Vagina (tissue), 2 donors: ENCODE measurements at regions of chr5 and their contacts with region 1.

Region 1: GRCh38 chr5:119274767-119275130 is 81.1 kb upstream of the TNFAIP8 start:
- DNase-seq: no peak
- H3K4me3 ChIP-seq: no peak overlapping the region
- H3K27ac ChIP-seq: peak overlapping the region; percentile 64
- H3K4me1 ChIP-seq: peaks cover 52% of the 10 kb centered on the region
- H3K27me3 ChIP-seq: no peaks in the 10 kb centered on the region
- CTCF ChIP-seq: no peak
- POLR2A ChIP-seq: no peak

Region 2: GRCh38 chr5:119313658-119314605 is 39.2 kb after region 1 on chr5:
- intact Hi-C with region 1: no loop called
- DNase-seq: no peak
- H3K4me3 ChIP-seq: no peak overlapping the region
- H3K27ac ChIP-seq: no peak overlapping the region
- H3K4me1 ChIP-seq: peaks cover 7% of the 10 kb centered on the region
- H3K27me3 ChIP-seq: no peaks in the 10 kb centered on the region
- CTCF ChIP-seq: no peak
- POLR2A ChIP-seq: no peak

Region 3: GRCh38 chr5:119328753-119329602 is 54.2 kb after region 1 on chr5:
- intact Hi-C with region 1: loop called (anchors 10 kb)
- DNase-seq: no peak
- H3K4me3 ChIP-seq: no peak overlapping the region
- H3K27ac ChIP-seq: peak overlapping the region; percentile 70
- H3K4me1 ChIP-seq: peaks cover 73% of the 10 kb centered on the region
- H3K27me3 ChIP-seq: no peaks in the 10 kb centered on the region
- CTCF ChIP-seq: no peak
- POLR2A ChIP-seq: no peak